ENCODE measurements at regions of chr12 and their contacts with region 1.

Region 1: GRCh38 chr12:127925971-127926370 is 341.0 kb upstream of the TMEM132C start:
- DNase-seq: peak in 1 of 2 donors; percentile 55
- ATAC-seq: no peak
- H3K4me3 ChIP-seq: no peak overlapping the region
- H3K27ac ChIP-seq: no peak overlapping the region
- H3K4me1 ChIP-seq: peaks cover 2 to 13% of the 10 kb centered on the region in 2 donors
- H3K27me3 ChIP-seq: no peaks in the 10 kb centered on the region

Region 2: DNA sequence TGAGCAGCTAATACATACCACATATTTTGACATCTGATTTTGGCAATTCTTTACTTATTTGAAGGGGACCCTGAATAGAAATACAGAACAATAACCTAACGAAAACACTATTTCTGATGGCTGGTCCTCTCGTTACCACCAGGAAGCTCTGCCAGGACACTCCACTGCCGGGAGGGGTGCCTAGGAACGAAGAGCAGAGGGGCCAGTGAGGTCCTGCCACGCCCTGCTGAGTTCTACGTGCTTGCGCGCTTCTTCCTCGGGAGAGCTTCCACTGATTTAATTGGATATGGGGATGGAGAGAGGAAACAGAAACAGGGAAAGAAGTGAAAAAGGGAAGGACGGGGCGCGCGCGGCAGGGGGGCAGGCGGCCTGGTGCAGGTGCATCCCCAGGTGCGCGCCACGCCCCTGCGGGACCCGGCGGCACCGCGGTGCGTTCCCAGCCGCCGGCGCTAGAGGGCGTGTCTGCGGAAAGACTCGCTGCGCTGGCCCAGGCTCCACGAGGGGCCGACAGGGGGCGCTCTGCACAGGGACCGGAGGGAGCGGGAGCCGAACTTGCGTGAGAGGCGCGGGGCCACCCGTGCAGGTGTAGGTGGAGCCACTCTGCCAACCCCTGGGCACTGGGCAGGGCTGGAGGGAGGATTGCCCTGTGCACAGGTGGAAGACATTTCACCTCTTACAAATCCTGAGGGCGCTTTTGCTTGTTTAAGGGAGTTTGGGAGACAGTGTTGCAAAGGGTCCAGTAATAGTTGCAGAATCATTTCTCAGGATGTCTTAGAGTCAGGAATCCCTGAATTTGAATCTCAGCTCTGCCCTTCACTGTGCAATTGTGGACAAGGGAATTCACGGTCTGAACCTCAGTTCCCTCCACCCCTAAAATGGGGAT is 645.3 kb before region 1 on chr12:
- intact Hi-C with region 1: loop called in 1 of 2 experiments (anchors 10 kb)
- DNase-seq: peak; percentile 59 to 86
- ATAC-seq: peak; percentile 21
- H3K4me3 ChIP-seq: no peak overlapping the region
- H3K27ac ChIP-seq: no peak overlapping the region
- H3K4me1 ChIP-seq: no peaks in the 10 kb centered on the region
- H3K27me3 ChIP-seq: no peaks in the 10 kb centered on the region

Region 3: GRCh38 chr12:127381048-127381668 is 544.8 kb before region 1 on chr12:
- intact Hi-C with region 1: loop called in 1 of 2 experiments (anchors 10 kb)
- DNase-seq: peak in 1 of 2 donors; percentile 75
- ATAC-seq: peak; percentile 69
- H3K4me3 ChIP-seq: no peak overlapping the region
- H3K27ac ChIP-seq: no peak overlapping the region
- H3K4me1 ChIP-seq: no peaks in the 10 kb centered on the region
- H3K27me3 ChIP-seq: no peaks in the 10 kb centered on the region

Region 4: GRCh38 chr12:127811988-127812387 is 114.0 kb before region 1 on chr12:
- intact Hi-C with region 1: loop called in 1 of 2 experiments (anchors 2 kb)
- DNase-seq: peak in 1 of 2 donors; percentile 62
- ATAC-seq: no peak
- H3K4me3 ChIP-seq: no peak overlapping the region
- H3K27ac ChIP-seq: no peak overlapping the region
- H3K4me1 ChIP-seq: peaks cover 0 to 4% of the 10 kb centered on the region in 2 donors
- H3K27me3 ChIP-seq: no peaks in the 10 kb centered on the region

Region 5: DNA sequence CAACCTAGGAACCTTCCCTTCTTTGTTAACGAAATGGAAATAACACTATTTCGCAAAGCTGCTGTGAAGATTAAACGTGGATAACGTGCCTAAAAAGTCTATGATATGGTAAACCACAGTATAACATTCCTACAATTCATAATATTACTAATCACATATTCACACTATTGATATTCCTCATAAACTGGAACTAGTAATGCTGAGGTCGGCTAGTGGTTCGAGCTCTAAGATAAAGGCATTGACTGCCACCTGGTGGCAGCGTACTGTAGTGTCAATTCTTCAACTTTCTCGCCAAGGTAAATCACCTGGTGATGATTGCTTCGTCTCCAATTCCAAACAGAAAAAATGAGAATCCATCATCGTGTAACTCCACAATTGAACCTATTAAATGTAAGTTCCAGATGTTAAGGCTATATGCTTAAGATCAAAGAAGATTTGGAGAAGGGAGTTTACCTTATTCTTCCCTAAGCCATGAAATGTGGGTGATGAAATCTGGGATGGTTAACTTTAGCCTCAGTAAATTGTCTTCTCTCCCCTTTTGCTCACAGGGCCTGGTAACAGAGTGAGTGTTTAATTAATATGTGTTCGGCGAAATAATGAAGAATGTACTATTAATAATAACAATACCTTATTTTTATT is 143.5 kb after region 1 on chr12:
- intact Hi-C with region 1: loop called in 1 of 2 experiments (anchors 5 kb)
- DNase-seq: no peak
- ATAC-seq: no peak
- H3K4me3 ChIP-seq: no peak overlapping the region
- H3K27ac ChIP-seq: no peak overlapping the region
- H3K4me1 ChIP-seq: no peaks in the 10 kb centered on the region
- H3K27me3 ChIP-seq: no peaks in the 10 kb centered on the region

Measured in aorta (tissue), 5 donors.